Heart left ventricle (tissue), 16 donors: ENCODE measurements at regions of chr9 and their contacts with region 1.

Region 1: DNA sequence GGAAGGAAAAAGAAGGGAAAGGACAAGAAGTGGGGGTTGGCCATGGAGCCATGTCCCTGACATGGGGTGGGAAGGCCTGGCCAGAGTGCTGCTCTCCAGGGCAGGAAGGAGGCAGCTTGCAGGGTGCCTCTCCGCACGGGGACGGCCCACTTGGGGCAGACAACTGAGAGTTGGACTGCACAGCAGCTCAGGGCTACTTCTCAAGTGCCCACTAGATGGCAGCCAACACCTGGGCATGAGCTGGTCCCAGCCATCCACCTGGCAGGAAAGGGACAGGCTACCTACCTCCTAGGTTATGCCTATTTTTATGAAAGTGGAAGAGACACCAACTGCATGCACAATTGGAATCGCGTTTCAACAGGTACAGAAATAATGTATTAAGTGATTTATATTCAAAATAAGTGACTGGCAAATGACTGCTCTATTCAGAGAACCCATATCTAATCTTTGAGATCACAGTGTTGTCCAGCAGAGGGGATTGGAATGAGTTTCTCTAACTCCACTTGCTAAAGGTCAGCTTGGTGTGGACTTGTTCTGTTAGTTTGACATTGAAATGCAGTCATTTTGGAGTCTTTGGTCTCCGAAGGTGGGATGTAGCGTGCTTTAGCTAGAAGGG is 113.4 kb downstream of the SYK start:
- DNase-seq: peak; percentile 61 to 83 (median 72)
- ATAC-seq: peak; percentile 66 to 90 (median 85)
- H3K4me3 ChIP-seq: no peak overlapping the region
- H3K27ac ChIP-seq: no peak overlapping the region
- H3K4me1 ChIP-seq: peaks cover 0 to 4% (median 0%) of the 10 kb centered on the region in 12 donors
- H3K27me3 ChIP-seq: peaks cover 0 to 7% (median 0%) of the 10 kb centered on the region in 9 donors
- CTCF ChIP-seq: peak; percentile 76 to 95 (median 88)
- POLR2A ChIP-seq: no peak

Region 2: DNA sequence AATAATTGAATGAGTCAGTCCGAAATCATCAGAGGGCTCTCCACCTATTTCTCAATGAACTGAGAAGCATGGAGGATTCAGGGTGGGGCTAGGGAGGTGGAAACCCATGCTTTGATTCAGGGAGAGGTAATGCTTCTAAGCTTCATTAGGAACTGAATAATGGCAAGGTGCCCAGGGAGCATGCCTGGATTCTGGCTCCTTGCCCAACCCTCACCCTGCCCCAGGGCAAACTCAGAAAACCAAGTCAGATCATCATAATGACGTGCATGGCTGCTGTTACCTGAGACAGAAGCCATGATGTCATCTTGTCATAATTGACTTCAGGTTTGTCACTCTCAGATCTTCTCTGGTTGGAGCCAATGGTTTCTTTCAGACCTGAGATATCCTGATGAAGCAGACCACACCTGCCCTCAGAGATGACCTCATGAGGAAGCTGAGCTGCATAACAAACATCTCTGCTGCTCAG is 86.2 kb after region 1 on chr9:
- intact Hi-C with region 1: no loop called
- DNase-seq: no peak
- ATAC-seq: no peak
- H3K4me3 ChIP-seq: no peak overlapping the region
- H3K27ac ChIP-seq: no peak overlapping the region
- H3K4me1 ChIP-seq: peaks cover 0 to 4% (median 0%) of the 10 kb centered on the region in 12 donors
- H3K27me3 ChIP-seq: no peaks in the 10 kb centered on the region
- CTCF ChIP-seq: no peak
- POLR2A ChIP-seq: no peak

Region 3: DNA sequence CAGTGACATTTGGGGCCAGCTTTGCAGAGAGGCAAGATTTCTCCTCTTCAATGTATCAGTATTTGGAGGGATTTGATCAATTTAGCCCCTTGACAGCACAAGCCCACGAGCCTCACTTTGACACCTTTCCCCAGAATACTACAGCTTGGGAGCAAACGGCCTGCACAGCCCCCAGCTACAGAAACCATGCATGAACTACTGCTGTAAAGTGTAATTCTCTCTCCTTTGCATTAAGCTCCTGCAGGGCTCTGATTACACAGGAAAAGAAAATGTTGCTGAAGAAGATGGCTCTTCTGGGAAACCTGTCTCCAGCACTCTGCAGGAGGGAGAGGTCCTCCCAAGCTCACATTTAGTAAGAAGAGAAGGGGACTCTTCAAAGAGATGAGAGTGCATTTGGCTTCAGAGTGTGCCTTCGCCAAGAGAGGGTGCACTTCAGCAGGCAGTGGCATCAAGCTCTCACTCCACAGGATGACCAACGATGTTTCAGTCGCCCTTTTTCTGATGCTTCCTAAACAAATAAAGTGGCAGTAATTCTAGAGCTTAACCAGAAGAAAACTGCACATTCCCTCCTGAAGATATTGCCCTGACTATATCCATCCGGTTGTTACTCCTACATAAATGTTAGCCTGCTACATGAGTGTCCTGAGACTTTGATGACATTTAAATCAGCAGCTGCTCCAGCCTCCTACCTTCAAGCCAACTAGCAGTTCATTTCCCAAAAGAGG is 174.6 kb after region 1 on chr9:
- intact Hi-C with region 1: loop called in 1 of 10 experiments (anchors 5 kb)
- DNase-seq: peak in 1 of 5 donors; percentile 40
- ATAC-seq: peak; percentile 76 to 89 (median 82)
- H3K4me3 ChIP-seq: no peak overlapping the region
- H3K27ac ChIP-seq: no peak overlapping the region
- H3K4me1 ChIP-seq: peaks cover 0 to 10% (median 0%) of the 10 kb centered on the region in 12 donors
- H3K27me3 ChIP-seq: no peaks in the 10 kb centered on the region
- CTCF ChIP-seq: peak; percentile 20 to 68 (median 52)
- POLR2A ChIP-seq: no peak

Region 4: DNA sequence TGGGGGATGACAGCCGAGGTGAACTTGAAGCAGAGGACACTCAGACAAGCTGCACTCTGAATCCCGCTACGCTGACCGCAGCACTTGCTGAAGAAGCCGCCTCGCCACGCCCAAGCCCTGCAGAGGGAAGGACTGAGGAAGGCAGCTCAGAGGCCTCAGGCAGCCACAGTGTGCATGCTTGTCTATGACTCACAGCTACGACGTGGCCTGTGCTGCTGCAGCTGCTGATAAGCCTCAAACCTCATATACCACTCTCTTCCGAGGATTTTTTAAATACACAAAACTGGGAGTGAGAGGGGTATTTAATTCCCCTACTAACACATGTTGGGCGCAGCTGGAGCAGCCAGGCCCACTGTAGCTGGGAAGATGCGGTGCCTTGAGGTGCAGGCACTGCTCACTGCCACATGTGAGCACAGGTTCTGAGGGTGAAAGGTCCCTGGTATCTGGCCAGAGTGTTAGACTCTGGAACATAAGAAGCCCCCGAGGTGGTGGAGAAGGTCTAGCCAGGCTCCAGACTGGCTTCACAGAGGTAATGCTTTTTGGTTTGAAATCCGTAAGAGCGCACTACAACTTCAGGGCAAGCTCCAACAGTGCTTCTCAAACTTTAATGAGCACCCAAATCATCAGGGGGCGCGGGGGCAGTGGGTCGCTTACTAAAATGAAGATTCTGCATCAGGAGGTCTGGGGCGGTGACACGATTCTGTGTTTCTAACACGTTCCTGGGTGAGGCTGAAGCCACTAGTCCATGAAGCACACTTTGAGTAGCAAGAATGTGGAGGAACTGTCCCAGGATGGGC is 249.9 kb after region 1 on chr9:
- intact Hi-C with region 1: no loop called
- DNase-seq: peak in 4 of 5 donors; percentile 49 to 88 (median 71)
- ATAC-seq: peak; percentile 53 to 85 (median 71)
- H3K4me3 ChIP-seq: no peak overlapping the region
- H3K27ac ChIP-seq: peak overlapping the region in 1 of 12 donors; percentile 76
- H3K4me1 ChIP-seq: peaks cover 0 to 44% (median 8%) of the 10 kb centered on the region in 12 donors
- H3K27me3 ChIP-seq: no peaks in the 10 kb centered on the region
- CTCF ChIP-seq: no peak
- POLR2A ChIP-seq: no peak

Region 5: DNA sequence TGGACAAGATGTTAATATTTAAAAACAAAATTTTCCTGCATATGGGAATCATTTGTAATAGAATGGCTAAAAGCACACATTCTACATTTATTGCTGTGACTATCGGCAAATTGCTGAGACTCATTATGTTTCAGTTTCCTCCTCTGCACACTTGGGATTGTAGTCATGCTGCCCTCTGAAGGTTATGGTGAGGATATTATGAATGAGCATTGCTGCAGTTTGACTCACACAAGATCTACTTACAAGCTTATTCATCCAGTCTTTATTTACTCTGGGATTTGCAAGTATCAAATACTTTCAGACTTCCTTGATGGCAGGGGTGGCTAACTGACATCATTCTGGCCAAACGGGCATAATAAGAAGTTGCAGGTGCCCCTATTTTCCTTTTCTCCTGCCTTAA is 518.2 kb after region 1 on chr9:
- intact Hi-C with region 1: loop called in 7 of 10 experiments (anchors 5 kb)
- DNase-seq: no peak
- ATAC-seq: peak in 3 of 4 donors; percentile 73 to 83 (median 77)
- H3K4me3 ChIP-seq: no peak overlapping the region
- H3K27ac ChIP-seq: no peak overlapping the region
- H3K4me1 ChIP-seq: peaks cover 0 to 13% (median 0%) of the 10 kb centered on the region in 12 donors
- H3K27me3 ChIP-seq: no peaks in the 10 kb centered on the region
- CTCF ChIP-seq: peak; percentile 18 to 65 (median 52)
- POLR2A ChIP-seq: no peak

Region 6: DNA sequence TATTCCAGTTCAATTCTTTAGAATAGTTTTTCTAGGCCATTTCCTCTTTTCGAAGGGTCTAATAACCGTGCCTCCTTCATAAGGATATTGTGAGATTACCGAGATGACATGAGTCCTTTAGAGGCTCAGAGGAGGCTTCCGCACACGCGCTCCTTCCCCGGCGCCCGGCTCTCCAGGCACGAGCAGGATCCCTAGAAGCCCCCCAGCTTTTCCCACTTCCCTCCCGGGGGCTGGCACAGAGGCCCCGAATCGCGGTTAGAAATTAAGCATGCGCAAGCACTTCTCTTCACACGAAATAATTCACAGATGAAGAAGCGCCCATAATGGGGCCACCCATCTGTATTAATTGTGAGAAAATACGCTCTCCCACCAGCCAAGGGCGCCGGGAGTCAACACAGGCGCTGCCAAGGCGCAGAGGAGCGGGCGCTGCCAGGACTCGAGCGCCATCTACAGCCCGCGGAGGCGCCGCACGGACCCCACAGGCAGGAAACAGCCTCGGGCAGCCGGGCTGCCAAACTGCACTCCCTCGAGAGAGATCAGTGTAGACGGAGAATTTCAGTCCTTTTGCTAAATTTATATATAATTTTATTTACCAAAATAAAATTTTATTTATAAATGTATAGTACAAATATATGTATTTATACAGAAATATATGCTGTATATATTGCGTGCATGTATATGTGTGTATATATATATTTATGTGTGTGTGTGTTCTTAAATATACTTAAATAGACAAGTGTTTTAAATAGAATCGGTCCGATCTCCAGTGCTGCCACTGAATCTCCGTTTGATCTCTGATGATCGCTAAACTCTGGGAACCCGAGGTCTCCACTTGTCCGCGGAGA is 766.7 kb after region 1 on chr9:
- intact Hi-C with region 1: loop called in 9 of 10 experiments (anchors 2 to 10 kb)
- DNase-seq: peak; percentile 67 to 89 (median 79)
- ATAC-seq: peak; percentile 82 to 99 (median 96)
- H3K4me3 ChIP-seq: peak overlapping the region in 4 of 12 donors; percentile 15 to 33 (median 32)
- H3K27ac ChIP-seq: no peak overlapping the region
- H3K4me1 ChIP-seq: peaks cover 0 to 7% (median 0%) of the 10 kb centered on the region in 12 donors
- H3K27me3 ChIP-seq: peaks cover 0 to 7% (median 0%) of the 10 kb centered on the region in 9 donors
- CTCF ChIP-seq: peak; percentile 80 to 94 (median 86)
- POLR2A ChIP-seq: no peak